Heart left ventricle (tissue), 16 donors: ENCODE measurements at regions of chr17 and their contacts with region 1.

Region 1: DNA sequence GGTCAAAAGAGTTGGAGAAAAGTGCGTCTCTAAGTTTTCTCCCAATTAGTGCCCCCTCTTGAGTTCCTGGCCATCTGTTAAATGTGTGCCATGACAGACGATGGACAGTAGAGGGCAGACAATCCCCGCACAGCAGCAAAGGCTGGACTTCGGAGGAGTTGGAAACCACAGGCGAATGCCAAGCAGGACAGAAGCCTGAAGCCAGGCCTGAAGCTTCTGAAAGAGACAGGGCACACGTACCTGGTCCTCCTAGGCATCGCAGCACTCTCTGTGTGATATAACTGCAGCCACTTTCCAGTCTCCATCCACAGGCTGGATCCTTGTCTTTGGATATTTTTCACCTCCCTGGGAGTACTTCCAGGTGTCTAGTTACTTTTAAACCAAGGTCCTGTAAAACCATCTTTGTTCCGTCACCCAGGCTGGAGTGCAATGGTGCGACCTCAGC is 14.5 kb downstream of the C17orf100 start:
- DNase-seq: peak; percentile 69 to 75 (median 73)
- ATAC-seq: peak; percentile 80 to 96 (median 92)
- H3K4me3 ChIP-seq: no peak overlapping the region
- H3K27ac ChIP-seq: no peak overlapping the region
- H3K4me1 ChIP-seq: peaks cover 0 to 6% (median 0%) of the 10 kb centered on the region in 12 donors
- H3K27me3 ChIP-seq: peaks cover 0 to 22% (median 9%) of the 10 kb centered on the region in 9 donors
- CTCF ChIP-seq: peak; percentile 77 to 95 (median 90)
- POLR2A ChIP-seq: no peak

Region 2: GRCh38 chr17:6753006-6753445 is 86.9 kb after region 1 on chr17:
- intact Hi-C with region 1: loop called in 3 of 10 experiments (anchors 5 to 10 kb)
- DNase-seq: peak; percentile 79 to 87 (median 81)
- ATAC-seq: peak; percentile 77 to 90 (median 79)
- H3K4me3 ChIP-seq: peak overlapping the region in 2 of 12 donors; percentile 1 to 17
- H3K27ac ChIP-seq: peak overlapping the region; percentile 76 to 97 (median 86)
- H3K4me1 ChIP-seq: peaks cover 0 to 67% (median 37%) of the 10 kb centered on the region in 12 donors
- H3K27me3 ChIP-seq: no peaks in the 10 kb centered on the region
- CTCF ChIP-seq: no peak
- POLR2A ChIP-seq: no peak

Region 3: DNA sequence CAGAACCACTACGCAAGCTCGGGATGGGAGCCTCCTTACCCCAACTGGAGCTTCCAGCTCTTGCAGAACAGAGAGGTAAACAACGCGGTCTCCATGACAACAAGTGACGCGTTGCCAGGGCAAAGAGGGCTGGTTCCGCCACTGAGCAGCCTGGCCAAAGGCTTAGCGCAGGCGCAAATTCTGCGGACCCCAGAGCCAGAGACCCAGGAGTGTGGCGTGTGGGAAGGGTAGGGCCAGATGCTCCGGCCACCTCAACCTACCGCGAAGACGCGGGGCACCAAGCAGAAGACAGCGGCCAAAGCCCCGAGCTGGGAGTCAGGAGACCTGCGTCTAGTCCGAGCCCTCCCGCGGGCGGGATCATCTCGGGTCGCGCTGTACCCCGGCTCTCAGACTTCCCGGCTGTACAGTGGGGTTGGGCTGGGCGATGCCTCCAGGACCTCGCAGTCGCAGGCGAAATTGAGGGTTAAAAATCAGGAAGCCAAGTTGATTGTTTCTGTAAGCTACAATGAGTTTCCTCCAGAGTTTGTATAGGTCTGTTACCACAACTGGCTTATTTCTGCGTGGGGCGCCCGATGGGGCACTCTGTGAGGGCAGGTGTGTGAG is 165.7 kb after region 1 on chr17 and contains the start of gene TEKT1:
- intact Hi-C with region 1: loop called in 1 of 10 experiments (anchors 5 kb)
- DNase-seq: peak; percentile 66 to 84 (median 69)
- ATAC-seq: peak in 3 of 4 donors; percentile 81 to 94 (median 81)
- H3K4me3 ChIP-seq: peak within 1 kb of the TSS in 10 of 12 donors; percentile 5 to 49 (median 33)
- H3K27ac ChIP-seq: no peak within 1 kb of the TSS
- H3K4me1 ChIP-seq: peaks cover 0 to 11% (median 5%) of the 10 kb centered on the region in 12 donors
- H3K27me3 ChIP-seq: peaks cover 4 to 82% (median 46%) of the 10 kb centered on the region in 9 donors
- CTCF ChIP-seq: no peak
- POLR2A ChIP-seq: no peak
- total RNA-seq, gene TEKT1: not detected

Region 4: GRCh38 chr17:6894206-6894528 is 228.1 kb after region 1 on chr17:
- intact Hi-C with region 1: loop called in 2 of 10 experiments (anchors 5 to 10 kb)
- DNase-seq: peak in 1 of 5 donors; percentile 48
- ATAC-seq: no peak
- H3K4me3 ChIP-seq: peak overlapping the region in 1 of 12 donors; percentile 19
- H3K27ac ChIP-seq: no peak overlapping the region
- H3K4me1 ChIP-seq: peaks cover 0 to 11% (median 0%) of the 10 kb centered on the region in 12 donors
- H3K27me3 ChIP-seq: peaks cover 0 to 56% (median 20%) of the 10 kb centered on the region in 9 donors
- CTCF ChIP-seq: peak in 8 of 12 donors; percentile 16 to 51 (median 34)
- POLR2A ChIP-seq: no peak

Region 5: GRCh38 chr17:7004398-7005253 is 338.5 kb after region 1 on chr17:
- intact Hi-C with region 1: loop called in 9 of 10 experiments (anchors 2 to 10 kb)
- DNase-seq: no peak
- ATAC-seq: peak; percentile 16 to 81 (median 72)
- H3K4me3 ChIP-seq: no peak overlapping the region
- H3K27ac ChIP-seq: no peak overlapping the region
- H3K4me1 ChIP-seq: peaks cover 0 to 8% (median 0%) of the 10 kb centered on the region in 12 donors
- H3K27me3 ChIP-seq: no peaks in the 10 kb centered on the region
- CTCF ChIP-seq: peak; percentile 58 to 80 (median 72)
- POLR2A ChIP-seq: no peak